ENCODE measurements at regions of chr2 and their contacts with region 1.

Region 1: GRCh38 chr2:232854082-232854481 is 16.0 kb upstream of the SNORC start:
- DNase-seq: no peak
- H3K4me3 ChIP-seq: no peak overlapping the region
- H3K27ac ChIP-seq: no peak overlapping the region
- H3K4me1 ChIP-seq: peaks cover 0 to 13% (median 0%) of the 10 kb centered on the region in 3 donors
- H3K27me3 ChIP-seq: no peaks in the 10 kb centered on the region
- CTCF ChIP-seq: no peak
- POLR2A ChIP-seq: no peak

Region 2: DNA sequence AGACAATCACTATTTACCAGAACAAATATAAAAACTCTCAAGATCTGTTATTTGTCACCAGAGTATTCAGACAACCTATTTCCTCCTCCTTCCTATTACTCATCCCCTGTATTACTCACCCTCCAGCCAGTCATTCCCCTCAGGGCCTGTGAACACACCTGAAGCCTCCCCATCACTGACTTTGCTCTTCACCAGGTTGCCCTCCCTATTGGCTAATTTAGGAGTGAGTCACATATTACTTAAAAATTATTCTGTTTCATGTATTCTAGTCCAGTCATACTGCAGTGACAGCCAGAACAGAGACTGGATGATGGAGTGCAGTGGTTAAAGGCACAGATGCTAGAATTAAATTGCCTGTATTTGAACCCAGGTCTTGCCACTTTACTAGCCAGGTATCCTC is 393.7 kb after region 1 on chr2:
- intact Hi-C with region 1: loop called (anchors 10 kb)
- DNase-seq: no peak
- H3K4me3 ChIP-seq: no peak overlapping the region
- H3K27ac ChIP-seq: peak overlapping the region; percentile 60 to 75 (median 72)
- H3K4me1 ChIP-seq: peaks cover 0 to 32% (median 11%) of the 10 kb centered on the region in 3 donors
- H3K27me3 ChIP-seq: no peaks in the 10 kb centered on the region
- CTCF ChIP-seq: no peak
- POLR2A ChIP-seq: no peak

Measured in esophagus squamous epithelium (tissue), 5 donors.